Sigmoid colon (tissue), 7 donors: ENCODE measurements at regions of chr16 and their contacts with region 1.

Region 1: GRCh38 chr16:2500918-2501750 is 12.6 kb upstream of the ATP6V0C start:
- DNase-seq: peak; percentile 93
- H3K4me3 ChIP-seq: peak overlapping the region in 3 of 4 donors; percentile 1 to 40 (median 35)
- H3K27ac ChIP-seq: peak overlapping the region; percentile 36 to 70 (median 47)
- H3K4me1 ChIP-seq: peaks cover 0 to 45% (median 25%) of the 10 kb centered on the region in 4 donors
- H3K27me3 ChIP-seq: no peaks in the 10 kb centered on the region
- CTCF ChIP-seq: peak; percentile 98 to 99 (median 98)
- EP300 ChIP-seq: no peak
- POLR2A ChIP-seq: no peak

Region 2: DNA sequence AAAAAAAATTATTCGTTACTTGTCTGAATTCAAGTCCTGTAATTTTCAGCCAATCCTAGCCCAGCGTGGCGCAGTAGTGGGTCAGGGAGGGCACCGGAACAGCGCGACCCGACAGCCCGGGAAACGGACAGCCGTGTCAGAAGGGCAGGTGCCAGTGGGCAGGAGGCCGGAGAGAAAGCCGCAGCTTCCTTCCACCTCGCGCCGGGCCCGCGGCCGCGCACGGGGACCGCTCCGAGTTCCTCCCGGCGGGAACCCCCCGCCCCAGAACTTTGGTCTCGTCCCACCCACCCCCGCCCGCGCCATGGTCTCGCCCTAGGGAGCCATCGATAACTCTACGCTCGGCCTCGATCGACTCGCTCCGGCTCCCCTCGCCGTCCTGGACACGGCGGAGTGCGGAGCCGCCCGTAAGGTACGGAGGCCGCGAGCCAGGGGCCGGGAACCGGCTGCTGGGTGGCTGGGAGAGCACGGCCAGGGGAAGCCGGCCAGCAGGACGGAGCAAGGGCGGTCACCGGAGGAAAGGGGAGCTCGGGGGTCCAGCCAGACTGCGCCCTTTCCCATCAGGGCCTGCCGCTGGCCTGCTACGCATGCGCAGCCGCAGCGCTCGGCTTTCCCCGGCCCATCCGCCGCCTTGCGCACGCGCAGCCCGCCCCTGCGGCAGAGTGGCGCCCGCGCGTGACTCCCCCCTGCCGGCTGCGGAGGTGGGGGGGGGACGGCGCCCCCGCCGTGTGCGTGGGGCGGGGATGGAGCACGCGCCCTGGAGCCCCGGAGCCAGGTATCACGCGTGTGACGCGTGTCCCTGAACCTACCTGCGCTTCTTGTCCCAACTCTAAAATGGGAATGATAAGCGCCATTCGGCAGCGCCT is 295.8 kb before region 1 on chr16 and contains the start of gene MLST8:
- intact Hi-C with region 1: no loop called
- DNase-seq: peak; percentile 94
- H3K4me3 ChIP-seq: peak within 1 kb of the TSS; percentile 83 to 89 (median 88)
- H3K27ac ChIP-seq: peak within 1 kb of the TSS; percentile 97 to 100 (median 98)
- H3K4me1 ChIP-seq: peaks cover 0 to 20% (median 18%) of the 10 kb centered on the region in 4 donors
- H3K27me3 ChIP-seq: no peaks in the 10 kb centered on the region
- CTCF ChIP-seq: no peak
- EP300 ChIP-seq: peak in 1 of 4 donors; percentile 8
- POLR2A ChIP-seq: peak; percentile 54 to 71
- total RNA-seq, gene MLST8: 30.6 to 48.5 (median 37.1) TPM

Region 3: GRCh38 chr16:2278272-2278608 is 222.9 kb before region 1 on chr16:
- intact Hi-C with region 1: loop called (anchors 10 kb)
- DNase-seq: no peak
- H3K4me3 ChIP-seq: no peak overlapping the region
- H3K27ac ChIP-seq: no peak overlapping the region
- H3K4me1 ChIP-seq: no peaks in the 10 kb centered on the region
- H3K27me3 ChIP-seq: no peaks in the 10 kb centered on the region
- CTCF ChIP-seq: no peak
- EP300 ChIP-seq: no peak
- POLR2A ChIP-seq: no peak

Region 4: DNA sequence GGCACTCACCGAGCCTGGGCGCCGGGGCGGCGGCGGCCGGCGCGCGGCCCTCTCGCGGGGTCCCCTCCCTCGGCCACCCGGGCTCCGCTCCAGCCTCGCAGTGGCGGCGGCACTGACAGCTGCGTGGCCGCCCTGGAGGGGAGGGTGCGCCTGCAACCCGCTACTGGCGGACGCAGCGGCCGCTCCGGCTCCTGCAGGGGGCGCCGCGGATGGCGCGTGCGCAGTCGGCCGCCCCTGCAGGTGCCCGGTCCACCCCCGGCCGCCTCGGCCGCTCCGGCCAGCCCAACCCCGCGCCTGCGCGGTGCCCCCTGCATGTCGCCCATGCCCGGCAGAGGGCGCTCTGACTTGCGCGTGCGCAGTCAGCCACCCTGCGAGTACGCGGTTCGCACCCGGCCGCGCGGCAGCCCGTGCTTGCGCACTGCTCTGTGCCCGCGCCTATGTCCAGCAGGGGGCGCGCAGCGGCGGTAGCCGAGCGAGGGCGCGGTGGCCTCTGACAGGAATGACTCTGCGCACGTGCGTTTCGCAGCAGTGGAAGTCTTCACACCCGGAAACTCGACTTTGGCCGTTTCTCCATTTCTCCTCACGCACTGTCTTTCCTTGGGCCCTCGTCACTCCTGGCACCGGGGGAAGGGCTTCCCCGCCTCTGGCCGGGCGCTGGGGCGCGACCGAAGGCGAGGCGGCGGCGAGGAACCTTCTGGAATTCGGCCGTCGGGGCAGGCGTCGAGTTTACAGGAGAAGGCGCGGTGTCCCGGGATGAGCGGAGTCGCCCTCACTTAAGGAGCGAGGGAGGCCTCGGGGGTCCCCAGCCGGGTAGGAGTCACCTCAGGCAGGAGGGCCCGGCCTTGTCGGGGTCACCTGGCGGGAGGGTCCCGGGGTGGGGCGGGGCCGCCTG is 160.3 kb before region 1 on chr16 and contains the start of gene ABCA3:
- intact Hi-C with region 1: loop called (anchors 1 kb)
- DNase-seq: peak; percentile 95
- H3K4me3 ChIP-seq: peak within 1 kb of the TSS; percentile 68 to 82 (median 81)
- H3K27ac ChIP-seq: peak within 1 kb of the TSS; percentile 67 to 76 (median 70)
- H3K4me1 ChIP-seq: peaks cover 0 to 27% (median 22%) of the 10 kb centered on the region in 4 donors
- H3K27me3 ChIP-seq: no peaks in the 10 kb centered on the region
- CTCF ChIP-seq: peak; percentile 98 to 100 (median 99)
- EP300 ChIP-seq: no peak
- POLR2A ChIP-seq: no peak
- total RNA-seq, gene ABCA3: 4.9 to 21.3 (median 7.4) TPM

Region 5: GRCh38 chr16:2415085-2415484 is 86.0 kb before region 1 on chr16:
- intact Hi-C with region 1: no loop called
- DNase-seq: no peak
- H3K4me3 ChIP-seq: no peak overlapping the region
- H3K27ac ChIP-seq: no peak overlapping the region
- H3K4me1 ChIP-seq: no peaks in the 10 kb centered on the region
- H3K27me3 ChIP-seq: peaks cover 0 to 13% (median 0%) of the 10 kb centered on the region in 3 donors
- CTCF ChIP-seq: no peak
- EP300 ChIP-seq: no peak
- POLR2A ChIP-seq: no peak

Region 6: DNA sequence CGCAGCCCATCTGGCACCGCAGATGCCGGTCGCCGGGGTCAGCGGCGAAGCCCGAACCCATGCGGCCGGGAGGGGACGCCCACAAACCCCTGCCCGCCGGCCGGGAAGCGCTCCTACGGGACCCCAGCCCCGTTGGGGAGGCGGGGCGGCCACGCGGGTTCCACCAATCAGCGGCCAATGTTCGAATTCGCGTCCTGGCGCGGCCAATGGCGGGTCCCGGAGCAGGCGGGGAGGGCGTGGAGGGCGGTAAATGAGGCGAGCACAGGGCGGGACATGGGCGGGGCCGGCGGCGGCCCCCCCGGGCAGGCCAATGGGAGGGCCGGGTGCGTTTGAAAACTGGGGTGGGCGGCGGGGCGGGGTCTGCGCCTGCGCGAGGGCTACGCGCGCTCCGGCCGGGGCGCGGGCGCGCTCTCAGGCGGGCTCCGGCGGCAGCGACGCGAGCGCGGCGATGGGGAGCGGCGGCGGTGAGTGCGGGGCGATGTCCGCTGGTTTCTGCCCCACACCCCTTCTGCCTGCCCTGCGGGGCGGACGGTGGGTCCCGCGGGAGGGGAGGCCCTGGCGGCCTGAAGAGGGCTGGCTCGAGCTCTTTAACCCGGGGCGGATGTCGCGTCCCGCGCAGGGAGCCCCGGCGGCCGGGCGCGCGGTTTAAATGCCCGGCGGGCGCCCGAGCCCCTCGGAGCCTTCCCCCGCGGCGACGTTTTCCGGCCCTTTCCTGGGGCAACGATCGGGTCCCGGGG is 71.9 kb before region 1 on chr16 and contains the start of gene CCNF:
- intact Hi-C with region 1: loop called (anchors 5 kb)
- DNase-seq: peak; percentile 98
- H3K4me3 ChIP-seq: peak within 1 kb of the TSS; percentile 76 to 91 (median 80)
- H3K27ac ChIP-seq: peak within 1 kb of the TSS; percentile 75 to 81 (median 77)
- H3K4me1 ChIP-seq: peaks cover 0 to 18% (median 14%) of the 10 kb centered on the region in 4 donors
- H3K27me3 ChIP-seq: no peaks in the 10 kb centered on the region
- CTCF ChIP-seq: no peak
- EP300 ChIP-seq: no peak
- POLR2A ChIP-seq: no peak
- total RNA-seq, gene CCNF: 0.71 to 1.9 (median 1.1) TPM

Region 7: DNA sequence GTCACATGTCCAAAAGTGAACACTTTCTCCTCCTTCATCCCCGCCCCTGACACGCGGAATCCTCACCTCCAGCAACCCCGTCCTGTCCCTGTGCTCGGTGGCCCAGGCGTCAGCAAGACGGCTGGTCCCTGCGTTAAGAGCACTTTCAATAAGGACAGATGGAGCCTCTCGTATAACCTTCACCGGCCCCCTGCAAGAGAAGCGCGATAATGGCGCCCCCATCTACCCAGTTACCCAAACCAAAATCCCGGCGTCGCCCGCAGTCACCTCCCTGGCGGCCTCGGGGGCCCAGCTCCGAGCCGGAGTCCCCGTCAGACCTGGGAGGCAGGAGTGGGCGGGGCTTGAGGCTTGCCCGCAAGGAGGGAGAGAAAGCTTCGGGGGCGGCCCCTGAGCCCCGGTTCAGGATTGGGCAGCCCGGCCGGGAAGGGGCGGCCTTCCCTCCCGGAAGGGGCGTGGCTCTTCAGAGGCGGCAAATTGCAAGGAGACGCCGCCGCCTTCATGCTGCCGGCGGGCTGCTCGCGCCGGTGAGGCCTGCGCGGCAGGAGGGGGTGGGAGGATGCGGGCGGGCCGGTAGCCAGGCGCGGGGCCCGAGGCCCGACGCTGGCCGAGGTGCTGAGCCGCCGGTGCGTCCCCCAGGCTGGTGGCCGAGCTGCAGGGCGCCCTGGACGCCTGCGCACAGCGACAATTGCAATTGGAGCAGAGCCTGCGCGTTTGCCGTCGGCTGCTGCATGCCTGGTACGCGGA is 41.3 kb before region 1 on chr16 and contains the start of gene TEDC2:
- intact Hi-C with region 1: loop called (anchors 5 kb)
- DNase-seq: peak; percentile 98
- H3K4me3 ChIP-seq: peak within 1 kb of the TSS; percentile 38 to 57 (median 54)
- H3K27ac ChIP-seq: peak within 1 kb of the TSS; percentile 44 to 64 (median 58)
- H3K4me1 ChIP-seq: peaks cover 0 to 17% (median 16%) of the 10 kb centered on the region in 4 donors
- H3K27me3 ChIP-seq: no peaks in the 10 kb centered on the region
- CTCF ChIP-seq: no peak
- EP300 ChIP-seq: no peak
- POLR2A ChIP-seq: no peak
- total RNA-seq, gene TEDC2: 8.3 TPM in 1 of 4 donors, not detected in the others

Region 8: GRCh38 chr16:2474877-2475412 is 26.2 kb before region 1 on chr16 and contains the start of gene TBC1D24:
- intact Hi-C with region 1: loop called (anchors 2 kb)
- DNase-seq: peak; percentile 92
- H3K4me3 ChIP-seq: peak within 1 kb of the TSS; percentile 60 to 88 (median 74)
- H3K27ac ChIP-seq: peak within 1 kb of the TSS; percentile 84 to 89 (median 88)
- H3K4me1 ChIP-seq: peaks cover 0 to 48% (median 39%) of the 10 kb centered on the region in 4 donors
- H3K27me3 ChIP-seq: peaks cover 25 to 37% (median 35%) of the 10 kb centered on the region in 3 donors
- CTCF ChIP-seq: no peak
- EP300 ChIP-seq: no peak
- POLR2A ChIP-seq: peak in 1 of 2 donors; percentile 20
- total RNA-seq, gene TBC1D24: 5.9 to 16.1 (median 10.5) TPM